ENCODE measurements at regions of chr3 and their contacts with region 1.

Region 1: GRCh38 chr3:177197041-177197727 is at the start of gene TBL1XR1:
- DNase-seq: peak; percentile 91 to 96
- ATAC-seq: peak; percentile 90 to 92
- H3K4me3 ChIP-seq: peak within 1 kb of the TSS; percentile 72 to 92 (median 84)
- H3K27ac ChIP-seq: peak within 1 kb of the TSS; percentile 94 to 98 (median 96)
- H3K4me1 ChIP-seq: peaks cover 17 to 20% of the 10 kb centered on the region in 2 donors
- H3K27me3 ChIP-seq: no peaks in the 10 kb centered on the region
- CTCF ChIP-seq: no peak
- POLR2A ChIP-seq: peak in 1 of 2 donors; percentile 30
- total RNA-seq, gene TBL1XR1: 35.9 to 77.8 (median 49.2) TPM

Region 2: GRCh38 chr3:176584413-176585176 is 612.6 kb before region 1 on chr3:
- in situ Hi-C with region 1: no loop called
- intact Hi-C with region 1: no loop called
- DNase-seq: no peak
- ATAC-seq: no peak
- H3K4me3 ChIP-seq: no peak overlapping the region
- H3K27ac ChIP-seq: no peak overlapping the region
- H3K4me1 ChIP-seq: no peaks in the 10 kb centered on the region
- H3K27me3 ChIP-seq: no peaks in the 10 kb centered on the region
- CTCF ChIP-seq: no peak
- POLR2A ChIP-seq: no peak

Region 3: GRCh38 chr3:176953106-176954060 is 243.8 kb before region 1 on chr3:
- in situ Hi-C with region 1: no loop called
- intact Hi-C with region 1: loop called (anchors 5 kb)
- DNase-seq: peak; percentile 87 to 93
- ATAC-seq: peak; percentile 84 to 86
- H3K4me3 ChIP-seq: no peak overlapping the region
- H3K27ac ChIP-seq: peak overlapping the region; percentile 53 to 80 (median 68)
- H3K4me1 ChIP-seq: peaks cover 42% of the 10 kb centered on the region in 2 donors
- H3K27me3 ChIP-seq: no peaks in the 10 kb centered on the region
- CTCF ChIP-seq: no peak
- POLR2A ChIP-seq: no peak

Region 4: DNA sequence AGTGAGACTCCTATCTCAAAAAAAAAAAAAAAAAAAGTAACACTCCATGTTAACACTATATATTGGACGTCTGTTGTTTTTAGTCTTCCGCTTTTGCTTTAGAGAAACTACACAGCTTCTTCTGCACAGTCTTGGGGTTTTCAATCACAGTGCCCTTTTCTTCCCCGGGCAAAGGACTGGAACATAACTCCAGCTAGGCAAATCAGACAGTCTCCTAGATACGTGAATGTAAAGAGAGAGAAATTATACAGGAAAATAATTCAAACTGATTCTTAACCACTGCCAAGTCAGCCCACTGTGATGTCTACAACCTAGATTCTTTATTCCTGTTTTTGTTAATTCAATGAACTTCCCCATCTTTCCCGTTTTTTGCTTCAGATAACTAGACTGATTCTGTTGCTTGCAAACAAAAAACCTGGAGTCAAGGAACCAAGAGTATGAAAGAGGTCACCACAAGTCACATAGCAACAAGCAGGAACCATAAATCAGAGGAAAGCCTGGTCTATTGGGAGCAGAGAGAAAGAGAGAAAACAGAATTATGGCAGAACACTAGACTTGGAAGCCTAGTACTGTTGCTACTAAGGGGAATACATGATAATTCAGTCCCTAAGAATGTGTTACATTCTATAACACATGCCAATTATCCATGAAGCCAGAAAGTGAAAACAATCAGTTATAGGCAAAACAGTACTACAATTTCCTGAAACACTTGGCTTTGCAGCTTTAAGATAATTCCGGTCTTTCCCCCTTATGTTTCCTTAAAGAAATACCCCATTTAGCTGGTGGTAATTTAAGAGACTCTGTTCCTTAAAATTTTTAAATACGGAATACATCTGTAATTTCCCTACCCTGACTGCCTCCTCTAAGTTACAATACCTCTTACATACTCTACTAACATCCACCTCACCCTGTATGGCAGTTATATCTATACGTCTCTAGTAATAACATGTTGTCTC is 63.0 kb before region 1 on chr3:
- in situ Hi-C with region 1: no loop called
- intact Hi-C with region 1: loop called (anchors 5 kb)
- DNase-seq: no peak
- ATAC-seq: peak; percentile 24 to 43
- H3K4me3 ChIP-seq: no peak overlapping the region
- H3K27ac ChIP-seq: peak overlapping the region in 1 of 4 donors; percentile 17
- H3K4me1 ChIP-seq: peaks cover 21 to 44% of the 10 kb centered on the region in 2 donors
- H3K27me3 ChIP-seq: no peaks in the 10 kb centered on the region
- CTCF ChIP-seq: no peak
- POLR2A ChIP-seq: no peak

Region 5: GRCh38 chr3:177452474-177453450 is 255.6 kb after region 1 on chr3:
- in situ Hi-C with region 1: loop called in 1 of 4 experiments (anchors 25 kb)
- intact Hi-C with region 1: no loop called
- DNase-seq: no peak
- ATAC-seq: peak; percentile 33 to 80
- H3K4me3 ChIP-seq: no peak overlapping the region
- H3K27ac ChIP-seq: no peak overlapping the region
- H3K4me1 ChIP-seq: peaks cover 0 to 11% of the 10 kb centered on the region in 2 donors
- H3K27me3 ChIP-seq: no peaks in the 10 kb centered on the region
- CTCF ChIP-seq: no peak
- POLR2A ChIP-seq: no peak

Region 6: DNA sequence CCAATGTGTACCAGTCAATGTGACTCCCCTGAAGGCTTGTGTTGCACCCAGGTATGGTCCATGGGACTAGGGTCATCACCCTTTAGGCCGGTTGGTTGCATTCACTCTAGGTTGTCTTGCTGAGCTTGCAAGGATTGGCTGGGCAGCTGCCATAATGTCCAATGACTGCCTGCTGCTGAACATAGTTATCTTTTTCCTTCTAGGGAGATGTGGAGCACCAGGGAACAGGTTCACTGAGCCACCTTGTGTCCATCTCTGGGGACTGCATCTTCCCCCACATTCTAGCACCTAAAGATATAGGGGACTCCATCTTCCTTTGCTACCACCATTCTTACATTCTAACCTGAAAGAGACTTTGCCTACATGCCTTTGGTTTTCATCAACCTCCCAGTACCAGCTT is 580.5 kb after region 1 on chr3:
- in situ Hi-C with region 1: loop called in 1 of 4 experiments (anchors 10 kb)
- intact Hi-C with region 1: no loop called
- DNase-seq: peak; percentile 20 to 62
- ATAC-seq: peak; percentile 73 to 75
- H3K4me3 ChIP-seq: no peak overlapping the region
- H3K27ac ChIP-seq: no peak overlapping the region
- H3K4me1 ChIP-seq: peaks cover 26 to 31% of the 10 kb centered on the region in 2 donors
- H3K27me3 ChIP-seq: no peaks in the 10 kb centered on the region
- CTCF ChIP-seq: peak; percentile 62 to 83 (median 72)
- POLR2A ChIP-seq: no peak

Measured in gastrocnemius medialis (tissue), 4 donors.